Posterior vena cava (tissue), 2 donors: ENCODE measurements at regions of chr5 and their contacts with region 1.

Region 1: DNA sequence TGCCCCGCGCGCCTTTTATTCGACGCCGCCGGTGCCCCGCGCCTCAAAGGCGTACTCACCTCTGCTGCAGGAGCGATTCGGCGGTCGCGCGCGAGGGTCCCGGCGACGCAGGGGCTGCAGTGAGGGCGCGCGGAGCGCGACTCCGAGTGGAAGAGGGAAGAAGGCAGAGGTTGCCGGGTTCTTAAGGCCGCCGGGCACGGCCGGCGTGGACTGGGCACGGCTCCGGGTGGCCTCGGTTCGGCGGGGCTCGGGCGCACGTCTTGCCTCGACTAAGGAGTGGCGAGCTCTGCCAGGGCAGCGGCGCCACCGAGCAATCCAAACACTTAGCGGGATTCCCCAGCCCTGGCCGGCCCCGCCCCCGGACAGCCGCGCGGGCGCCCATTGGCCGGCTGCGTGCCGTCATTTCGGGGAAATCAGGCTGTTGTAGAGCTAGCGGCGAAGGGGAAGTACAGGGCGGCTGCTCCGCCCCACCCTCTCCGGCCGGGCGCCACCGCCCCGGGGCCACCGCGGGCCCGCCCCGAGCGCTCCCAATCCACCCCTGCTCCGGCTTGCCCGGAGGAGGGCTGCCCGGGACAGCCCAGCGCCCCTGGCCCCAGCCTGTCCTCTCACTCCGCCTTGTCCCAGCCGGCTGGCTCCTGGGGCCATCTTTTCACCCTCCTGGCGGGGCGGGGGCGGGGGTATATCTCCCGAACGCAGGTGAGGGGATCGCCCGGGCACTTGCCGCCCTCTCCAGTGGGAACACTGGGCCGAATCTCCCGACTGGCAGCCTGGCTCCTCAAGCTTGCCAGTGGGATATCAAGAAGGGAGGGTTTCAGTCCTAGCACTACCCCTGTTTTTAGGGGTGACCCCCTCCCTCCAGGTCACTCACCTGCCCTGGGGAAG is at the start of gene IRF1:
- DNase-seq: peak; percentile 99
- total RNA-seq, gene IRF1: 18.7 to 20.5 TPM

Region 2: GRCh38 chr5:132386644-132387286 is 104.0 kb before region 1 on chr5:
- intact Hi-C with region 1: loop called in 1 of 2 experiments (anchors 10 kb)
- DNase-seq: peak; percentile 92

Region 3: DNA sequence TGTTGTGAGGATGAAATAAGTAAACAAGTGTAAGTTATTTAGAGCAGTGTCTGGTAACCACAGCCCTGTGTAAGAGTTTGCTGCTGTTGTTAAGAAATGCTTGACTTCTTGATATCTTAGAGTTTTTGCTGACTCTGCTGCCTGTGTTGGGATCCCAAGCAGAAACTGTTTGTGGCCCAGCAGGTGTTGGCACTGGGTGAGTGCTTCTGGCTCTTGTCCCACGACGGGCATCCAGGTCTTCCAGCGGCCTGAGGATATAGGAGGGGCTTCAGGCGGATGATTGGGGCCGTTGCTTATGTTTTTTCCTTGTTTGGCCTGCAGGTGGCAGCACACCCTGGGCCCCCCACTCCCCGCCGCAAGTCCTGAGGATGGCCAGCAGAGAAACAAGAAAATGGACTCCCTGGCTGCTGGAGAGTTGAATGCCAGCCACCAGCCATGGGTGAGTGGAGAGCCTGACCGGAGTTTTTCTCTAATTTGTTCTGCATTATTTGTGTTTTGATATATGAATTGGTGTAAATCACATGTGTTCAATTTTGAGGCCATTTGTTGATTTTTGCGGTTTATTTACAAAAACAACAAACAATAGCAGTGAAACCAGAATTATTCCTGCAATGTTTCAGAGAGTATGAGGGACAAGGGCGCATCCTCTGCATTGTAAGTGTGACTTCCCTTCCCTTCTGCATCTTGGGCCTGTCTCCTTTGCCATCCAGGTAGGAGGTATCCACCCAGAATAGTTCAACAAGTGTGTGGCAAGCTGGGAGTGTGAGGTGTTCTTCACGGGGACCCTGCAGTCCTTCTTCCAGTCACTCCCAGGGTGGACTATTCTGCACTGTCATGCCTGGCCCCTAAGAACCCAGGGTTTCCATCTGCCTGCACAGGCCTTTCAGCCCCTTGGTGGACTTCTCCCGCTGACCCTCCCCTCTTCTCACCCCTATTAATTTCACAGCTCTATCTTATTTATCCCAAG is 70.9 kb before region 1 on chr5:
- intact Hi-C with region 1: loop called (anchors 5 to 10 kb)
- DNase-seq: peak; percentile 87

Region 4: GRCh38 chr5:132474881-132475496 is 15.7 kb before region 1 on chr5:
- intact Hi-C with region 1: loop called in 1 of 2 experiments (anchors 1 kb)
- DNase-seq: no peak